ENCODE measurements at regions of chr17 and their contacts with region 1.

Region 1: DNA sequence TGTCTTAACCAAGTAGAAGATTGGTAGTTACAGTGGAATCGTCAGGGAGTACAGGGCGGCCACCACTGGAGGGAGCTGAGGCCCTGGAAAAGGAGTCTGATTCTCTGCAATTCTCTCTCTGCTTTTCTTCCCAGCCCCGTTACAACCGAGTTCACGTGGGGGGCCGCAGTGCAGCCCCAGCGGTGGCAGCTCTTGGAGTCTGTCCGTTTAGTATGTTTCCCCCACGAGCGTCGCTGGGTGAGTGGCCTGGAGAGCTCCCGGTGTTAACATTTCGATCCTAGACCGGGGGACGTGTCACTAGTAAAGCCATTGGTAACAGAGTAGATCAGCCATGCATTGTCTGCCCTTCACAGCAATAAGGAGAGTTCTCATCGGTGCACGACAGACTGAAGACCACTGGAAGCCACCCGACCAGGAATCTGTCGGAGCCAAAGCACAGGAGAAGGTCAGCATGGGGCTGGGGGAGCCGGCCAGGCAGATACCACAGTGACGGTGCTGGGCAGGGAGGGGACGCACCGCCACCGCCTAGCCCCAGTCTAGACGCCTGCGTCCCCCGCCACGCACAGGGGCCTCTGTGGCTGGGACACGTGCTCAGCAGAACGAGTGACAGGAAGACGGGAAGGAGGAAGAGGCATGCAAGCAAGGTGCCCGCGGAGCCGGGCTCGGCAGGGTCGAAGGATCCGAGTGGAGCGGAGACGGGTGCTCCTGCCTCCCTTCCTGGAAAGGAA is 15.7 kb downstream of the SLC16A3 start:
- DNase-seq: peak in 1 of 2 experiments; percentile 62
- H3K4me3 ChIP-seq: no peak overlapping the region
- H3K4me3 Mint-ChIP-seq: no peak overlapping the region
- H3K27ac Mint-ChIP-seq: no peak overlapping the region
- H3K4me1 ChIP-seq: no peaks in the 10 kb centered on the region
- H3K4me1 Mint-ChIP-seq: peaks cover 13% of the 10 kb centered on the region
- H3K27me3 ChIP-seq: no peaks in the 10 kb centered on the region
- H3K27me3 Mint-ChIP-seq: no peaks in the 10 kb centered on the region
- CTCF ChIP-seq: peak; percentile 81

Region 2: DNA sequence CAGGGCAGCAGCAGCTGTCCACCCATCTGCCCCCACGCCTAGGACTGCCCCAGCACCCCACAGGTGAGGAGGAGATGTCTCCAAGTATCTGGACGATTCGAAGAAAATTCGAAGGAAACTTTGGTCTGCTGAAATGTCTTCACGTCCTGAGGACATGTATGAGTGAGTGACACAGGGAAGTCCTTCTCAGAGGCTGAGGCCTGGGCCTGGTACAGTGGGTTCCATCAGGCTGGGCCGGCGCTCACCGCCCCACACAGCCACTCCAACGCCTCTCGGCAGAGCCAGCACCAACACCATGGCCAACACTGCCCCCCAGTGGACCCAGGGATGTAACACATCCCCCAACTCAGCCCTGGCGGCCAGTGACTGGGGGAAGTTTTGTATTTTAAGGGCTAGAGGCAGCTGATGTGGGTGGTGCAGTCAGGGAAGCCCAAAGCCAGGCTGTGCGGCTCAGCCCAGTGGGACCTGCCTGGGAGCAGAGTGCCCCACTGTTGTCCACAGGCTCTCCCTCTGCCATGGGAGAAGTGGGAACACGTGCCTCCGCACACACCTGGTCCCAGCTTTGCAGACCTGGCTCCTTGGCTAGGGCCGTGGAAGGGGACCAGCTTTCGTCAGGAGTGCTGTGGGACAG is 90.7 kb before region 1 on chr17:
- CTCF ChIA-PET with region 1: no interaction called
- POLR2A ChIA-PET with region 1: no interaction called
- intact Hi-C with region 1: no loop called
- DNase-seq: peak; percentile 77 to 89
- H3K4me3 ChIP-seq: no peak overlapping the region
- H3K4me3 Mint-ChIP-seq: no peak overlapping the region
- H3K27ac Mint-ChIP-seq: no peak overlapping the region
- H3K4me1 ChIP-seq: 0 out of 2 replicates have a peak, but pooled peaks cover 3% of the 10 kb centered on the region
- H3K4me1 Mint-ChIP-seq: no peaks in the 10 kb centered on the region
- H3K27me3 ChIP-seq: no peaks in the 10 kb centered on the region
- H3K27me3 Mint-ChIP-seq: no peaks in the 10 kb centered on the region
- CTCF ChIP-seq: peak; percentile 93 to 96

Region 3: GRCh38 chr17:82262344-82262743 is 17.8 kb after region 1 on chr17:
- CTCF ChIA-PET with region 1: no interaction called
- POLR2A ChIA-PET with region 1: no interaction called
- intact Hi-C with region 1: no loop called
- DNase-seq: no peak
- H3K4me3 ChIP-seq: no peak overlapping the region
- H3K4me3 Mint-ChIP-seq: no peak overlapping the region
- H3K27ac Mint-ChIP-seq: no peak overlapping the region
- H3K4me1 ChIP-seq: peaks cover 18% of the 10 kb centered on the region
- H3K4me1 Mint-ChIP-seq: peaks cover 18% of the 10 kb centered on the region
- H3K27me3 ChIP-seq: no peaks in the 10 kb centered on the region
- H3K27me3 Mint-ChIP-seq: no peaks in the 10 kb centered on the region
- CTCF ChIP-seq: no peak

Region 4: DNA sequence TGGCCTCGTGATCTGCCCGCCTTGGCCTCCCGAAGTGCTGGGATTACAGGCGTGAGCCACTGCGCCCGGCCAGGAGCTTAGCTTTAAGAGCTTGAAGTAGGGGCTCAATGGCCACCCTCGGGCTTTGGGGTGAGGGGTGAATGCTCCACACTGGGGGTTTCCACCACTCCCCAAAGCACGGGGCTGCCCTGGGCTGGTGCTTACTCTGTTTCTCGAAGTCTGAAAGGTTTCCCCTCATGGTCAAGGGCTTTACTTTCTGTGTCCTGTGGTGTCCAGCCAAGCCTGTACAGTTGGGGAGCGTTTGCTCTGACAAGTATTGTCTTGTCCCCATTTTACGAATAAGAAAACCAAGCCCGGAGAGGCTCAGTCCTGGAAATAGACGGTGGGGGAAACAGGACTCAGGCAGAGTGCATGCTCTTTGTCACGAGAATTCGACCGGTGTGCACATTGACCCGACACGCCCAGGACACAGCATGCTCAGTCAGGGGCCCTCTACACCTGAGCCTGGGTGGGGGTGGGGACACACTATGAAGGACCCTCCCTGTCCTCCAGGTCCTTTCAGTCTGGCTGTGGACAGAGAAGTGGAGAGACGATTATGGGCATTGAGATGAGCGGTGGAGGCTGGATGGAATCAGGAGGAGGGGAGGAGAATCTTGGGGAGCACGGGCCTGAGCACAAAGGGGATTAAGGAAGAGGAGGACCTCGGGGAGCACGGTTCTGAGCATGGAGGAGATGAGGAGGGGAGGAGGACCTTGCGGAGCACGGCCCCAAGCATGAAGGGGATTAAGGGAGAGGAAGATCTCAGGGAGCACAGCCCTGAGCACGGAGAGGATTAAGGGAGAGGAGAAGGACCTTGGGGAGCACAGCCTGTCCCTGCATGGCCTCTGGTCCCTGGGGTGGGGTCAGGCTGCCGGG is 65.3 kb after region 1 on chr17:
- CTCF ChIA-PET with region 1: no interaction called
- POLR2A ChIA-PET with region 1: no interaction called
- intact Hi-C with region 1: no loop called
- DNase-seq: peak; percentile 37 to 78
- H3K4me3 ChIP-seq: no peak overlapping the region
- H3K4me3 Mint-ChIP-seq: no peak overlapping the region
- H3K27ac Mint-ChIP-seq: no peak overlapping the region
- H3K4me1 ChIP-seq: peaks cover 17% of the 10 kb centered on the region
- H3K4me1 Mint-ChIP-seq: peaks cover 14% of the 10 kb centered on the region
- H3K27me3 ChIP-seq: no peaks in the 10 kb centered on the region
- H3K27me3 Mint-ChIP-seq: no peaks in the 10 kb centered on the region
- CTCF ChIP-seq: no peak

Region 5: DNA sequence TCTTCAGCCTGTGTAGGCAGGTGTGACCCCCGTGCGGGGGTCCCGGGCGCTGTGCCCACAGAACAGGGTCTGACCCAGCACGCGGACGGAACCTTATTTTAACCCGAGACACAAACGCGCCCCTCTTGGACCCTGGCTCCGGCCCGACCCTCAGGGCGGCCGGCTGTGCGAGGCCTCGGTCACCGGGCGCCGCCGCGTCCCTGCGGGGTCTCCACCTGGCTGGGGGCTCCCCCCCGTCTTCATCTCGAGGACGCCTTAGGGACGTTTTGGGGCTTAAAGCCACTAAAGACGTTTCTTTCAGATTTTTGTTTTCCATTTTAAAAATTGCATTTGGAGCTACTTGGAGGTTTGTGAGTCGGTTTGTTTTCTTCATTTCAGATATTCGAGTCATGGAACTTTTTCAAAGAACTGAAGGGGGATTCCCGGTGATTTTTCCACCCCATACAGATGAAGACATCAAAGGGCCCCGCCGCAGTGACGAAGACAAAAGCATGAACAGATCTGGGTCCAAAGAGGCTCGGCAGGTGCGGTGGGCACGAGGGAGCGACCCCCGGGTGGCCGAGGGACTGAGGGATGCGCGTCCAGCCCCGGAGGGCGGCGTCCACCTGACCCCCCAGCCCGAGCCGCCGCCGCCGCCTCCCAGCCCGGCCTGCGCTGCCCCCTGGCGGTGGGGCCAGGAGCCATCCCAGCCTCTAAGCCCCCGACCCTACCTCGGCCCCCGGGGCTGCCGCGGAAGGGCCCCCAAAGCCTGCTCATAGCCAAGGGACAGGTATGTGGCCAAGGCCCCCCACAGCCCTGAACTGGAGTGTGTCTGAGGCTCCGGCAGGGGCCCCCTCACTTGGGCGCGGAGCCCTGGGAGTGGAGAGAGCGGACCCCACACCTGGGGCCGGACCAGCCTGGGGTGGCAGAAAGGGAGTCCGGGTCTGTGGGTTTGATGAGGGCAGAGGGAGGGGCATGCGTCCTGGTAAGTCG is 76.7 kb after region 1 on chr17:
- CTCF ChIA-PET with region 1: no interaction called
- POLR2A ChIA-PET with region 1: no interaction called
- intact Hi-C with region 1: loop called (anchors 1 kb)
- DNase-seq: peak in 1 of 2 experiments; percentile 83
- H3K4me3 ChIP-seq: peak overlapping the region; percentile 48
- H3K4me3 Mint-ChIP-seq: peak overlapping the region; percentile 76
- H3K27ac Mint-ChIP-seq: no peak overlapping the region
- H3K4me1 ChIP-seq: peaks cover 17% of the 10 kb centered on the region
- H3K4me1 Mint-ChIP-seq: no peaks in the 10 kb centered on the region
- H3K27me3 ChIP-seq: no peaks in the 10 kb centered on the region
- H3K27me3 Mint-ChIP-seq: no peaks in the 10 kb centered on the region
- CTCF ChIP-seq: peak; percentile 65 to 96

Measured in Caco-2 (cell line).